GM12878 (cell line): ENCODE measurements at regions of chr1 and their contacts with region 1.

Region 1: DNA sequence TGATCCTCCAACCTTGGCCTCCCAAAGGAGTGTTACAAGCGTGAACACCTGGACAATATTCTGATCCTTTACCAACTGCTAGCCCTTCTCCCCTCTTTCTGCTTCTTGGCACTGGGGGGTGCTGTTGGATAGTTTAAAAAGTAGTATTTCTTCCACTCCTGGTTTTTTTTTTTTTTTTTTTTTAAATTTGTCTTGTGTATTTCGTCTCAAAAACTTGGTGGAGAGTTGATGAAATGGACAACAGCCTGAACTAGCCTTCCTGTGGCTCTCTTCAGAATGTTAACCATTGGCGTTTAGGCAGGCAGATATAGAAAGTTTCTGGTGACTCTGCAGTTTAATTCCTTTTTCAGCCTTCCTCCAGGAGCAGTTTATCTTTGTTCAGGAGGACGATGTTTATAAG is 69.7 kb upstream of the USP24 start:
- DNase-seq: peak; percentile 5
- ATAC-seq: no peak
- H3K4me3 ChIP-seq: no peak overlapping the region
- H3K27ac ChIP-seq: no peak overlapping the region
- H3K4me1 ChIP-seq: peaks cover 18% of the 10 kb centered on the region
- H3K27me3 ChIP-seq: no peaks in the 10 kb centered on the region; a peak in 1 of 4 replicates
- CTCF ChIP-seq: peak; percentile 43 to 53 (median 49); a peak in 5 of 6 replicates
- EP300 ChIP-seq: no peak
- POLR2A ChIP-seq: no peak
- RAD21 ChIP-seq: peak; percentile 81

Region 2: DNA sequence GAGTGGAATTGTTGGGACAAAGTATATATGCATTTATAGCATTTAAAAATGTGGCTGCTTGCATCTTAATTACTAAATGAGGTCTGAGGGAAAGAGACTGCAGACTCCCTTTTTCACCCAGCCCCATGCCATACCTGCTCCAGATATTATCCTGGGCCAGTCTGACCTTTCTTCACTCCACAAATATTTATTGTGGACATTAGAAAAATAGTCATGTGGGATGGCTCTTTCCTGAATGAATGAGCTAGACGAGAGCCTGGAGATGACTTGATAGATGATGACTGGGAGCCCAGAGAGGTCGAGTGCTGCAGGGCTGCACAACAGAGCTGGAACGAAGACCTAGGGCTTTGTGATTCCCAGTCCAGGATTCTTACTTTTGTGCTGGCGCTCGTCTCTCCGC is 22.7 kb after region 1 on chr1:
- CTCF ChIA-PET with region 1: no interaction called
- POLR2A ChIA-PET with region 1: no interaction called
- RAD21 ChIA-PET with region 1: no interaction called
- SMC1A ChIA-PET with region 1: no interaction called
- in situ Hi-C with region 1: no loop called
- intact Hi-C with region 1: no loop called
- DNase-seq: no peak
- ATAC-seq: no peak
- H3K4me3 ChIP-seq: no peak overlapping the region
- H3K27ac ChIP-seq: no peak overlapping the region
- H3K4me1 ChIP-seq: no peaks in the 10 kb centered on the region
- H3K27me3 ChIP-seq: peaks cover 0 to 3% of the 10 kb centered on the region in 2 experiments; a peak in 1 of 4 replicates
- CTCF ChIP-seq: no peak
- EP300 ChIP-seq: no peak
- POLR2A ChIP-seq: no peak
- RAD21 ChIP-seq: no peak

Region 3: GRCh38 chr1:55375617-55376258 is 90.9 kb after region 1 on chr1:
- CTCF ChIA-PET with region 1: interaction called, 15 read pairs
- POLR2A ChIA-PET with region 1: no interaction called
- RAD21 ChIA-PET with region 1: interaction called, 3 read pairs
- SMC1A ChIA-PET with region 1: interaction called, 4 read pairs
- in situ Hi-C with region 1: no loop called
- intact Hi-C with region 1: no loop called
- DNase-seq: no peak
- ATAC-seq: peak; percentile 80
- H3K4me3 ChIP-seq: no peak overlapping the region
- H3K27ac ChIP-seq: no peak overlapping the region
- H3K4me1 ChIP-seq: no peaks in the 10 kb centered on the region
- H3K27me3 ChIP-seq: no peaks in the 10 kb centered on the region; a peak in 2 of 4 replicates
- CTCF ChIP-seq: peak; percentile 71 to 90 (median 89)
- EP300 ChIP-seq: no peak
- POLR2A ChIP-seq: no peak
- RAD21 ChIP-seq: peak; percentile 63

Region 4: DNA sequence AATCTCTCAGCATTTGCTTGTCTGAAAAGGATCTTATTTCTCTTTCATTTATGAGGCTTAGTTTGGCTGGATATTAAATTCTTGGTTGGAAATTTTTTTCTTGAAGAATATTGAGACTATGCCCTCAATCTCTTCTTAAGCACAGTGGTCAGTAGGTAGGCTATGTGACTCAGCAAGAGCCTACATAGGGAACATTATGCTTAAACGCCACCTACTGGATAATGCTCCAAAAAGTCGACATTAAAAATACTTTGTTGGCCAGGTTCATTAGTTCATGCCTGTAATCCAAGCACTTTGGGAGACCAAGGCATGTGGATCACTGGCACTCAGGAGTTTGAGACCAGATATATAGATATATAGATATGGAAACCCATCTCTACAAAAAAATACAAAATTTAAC is 608.3 kb after region 1 on chr1:
- CTCF ChIA-PET with region 1: no interaction called
- POLR2A ChIA-PET with region 1: no interaction called
- RAD21 ChIA-PET with region 1: no interaction called
- SMC1A ChIA-PET with region 1: no interaction called
- in situ Hi-C with region 1: loop called (anchors 10 kb)
- intact Hi-C with region 1: loop called (anchors 5 kb)
- DNase-seq: no peak
- ATAC-seq: peak; percentile 78
- H3K4me3 ChIP-seq: no peak overlapping the region
- H3K27ac ChIP-seq: no peak overlapping the region
- H3K4me1 ChIP-seq: no peaks in the 10 kb centered on the region
- H3K27me3 ChIP-seq: no peaks in the 10 kb centered on the region; a peak in 1 of 4 replicates
- CTCF ChIP-seq: peak; percentile 32 to 44 (median 36)
- EP300 ChIP-seq: no peak
- POLR2A ChIP-seq: no peak
- RAD21 ChIP-seq: peak; percentile 48; the same call in 1 of the 2 replicates

Region 5: GRCh38 chr1:56803561-56804156 is 1518.8 kb after region 1 on chr1:
- CTCF ChIA-PET with region 1: interaction called, 4 read pairs
- POLR2A ChIA-PET with region 1: no interaction called
- RAD21 ChIA-PET with region 1: no interaction called
- SMC1A ChIA-PET with region 1: no interaction called
- in situ Hi-C with region 1: no loop called
- intact Hi-C with region 1: loop called (anchors 5 kb)
- DNase-seq: no peak
- ATAC-seq: peak; percentile 94
- H3K4me3 ChIP-seq: no peak overlapping the region
- H3K27ac ChIP-seq: no peak overlapping the region
- H3K4me1 ChIP-seq: no peaks in the 10 kb centered on the region
- H3K27me3 ChIP-seq: no peaks in the 10 kb centered on the region
- CTCF ChIP-seq: peak; percentile 63 to 74 (median 73)
- EP300 ChIP-seq: no peak
- POLR2A ChIP-seq: no peak
- RAD21 ChIP-seq: peak; percentile 30